ENCODE measurements at regions of chrX and their contacts with region 1.

Region 1: DNA sequence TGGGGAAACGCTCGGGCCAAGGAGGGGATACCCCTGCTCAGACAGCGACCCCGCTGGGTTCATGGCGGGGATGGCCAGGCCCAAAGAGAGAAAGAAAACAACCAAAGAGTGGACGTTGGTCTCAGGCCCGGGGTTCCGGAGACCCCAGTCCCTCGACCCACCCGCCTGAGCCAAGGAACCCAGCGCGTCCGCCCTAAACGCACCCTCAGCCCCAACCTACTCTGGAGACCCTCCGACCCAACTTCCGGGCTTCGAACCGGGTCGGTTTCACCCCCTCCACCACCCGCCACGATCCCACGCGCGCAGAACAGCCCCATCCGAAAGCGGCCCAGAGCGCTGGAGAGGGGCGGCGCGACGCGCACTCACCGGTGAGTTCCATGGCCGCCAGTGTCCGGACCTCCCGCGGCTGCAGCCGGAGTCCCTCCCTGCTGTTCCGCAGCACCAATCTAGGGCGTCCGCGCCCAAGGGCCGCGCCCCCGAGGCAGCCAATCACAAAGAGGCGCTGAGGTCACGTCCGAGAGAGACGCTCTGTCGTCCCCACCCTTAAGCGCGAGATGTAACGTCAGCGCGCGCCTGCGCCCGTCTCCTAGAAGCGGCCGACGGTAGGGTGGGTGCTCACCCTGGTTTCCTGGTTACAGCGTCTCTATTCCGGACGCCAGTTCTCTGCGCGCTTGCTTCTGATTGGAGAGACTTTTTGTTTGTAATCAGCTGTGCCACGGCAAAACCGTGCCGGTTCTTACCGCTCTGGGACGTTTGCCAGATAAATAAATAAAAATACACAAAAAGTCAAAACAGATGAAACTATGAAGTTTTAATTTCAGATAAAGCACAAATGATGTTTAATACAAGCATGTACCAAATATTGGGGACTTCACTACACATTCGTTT is at the start of gene PIGA:
- H3K4me3 Mint-ChIP-seq: peak within 1 kb of the TSS; percentile 95
- H3K27ac Mint-ChIP-seq: peak within 1 kb of the TSS; percentile 94
- H3K4me1 Mint-ChIP-seq: no peaks in the 10 kb centered on the region
- H3K27me3 Mint-ChIP-seq: peaks cover 9% of the 10 kb centered on the region

Region 2: GRCh38 chrX:15366506-15367352 is 31.4 kb after region 1 on chrX:
- intact Hi-C with region 1: no loop called
- H3K4me3 Mint-ChIP-seq: no peak overlapping the region
- H3K27ac Mint-ChIP-seq: peak overlapping the region; percentile 37
- H3K4me1 Mint-ChIP-seq: peaks cover 18% of the 10 kb centered on the region
- H3K27me3 Mint-ChIP-seq: no peaks in the 10 kb centered on the region

Region 3: DNA sequence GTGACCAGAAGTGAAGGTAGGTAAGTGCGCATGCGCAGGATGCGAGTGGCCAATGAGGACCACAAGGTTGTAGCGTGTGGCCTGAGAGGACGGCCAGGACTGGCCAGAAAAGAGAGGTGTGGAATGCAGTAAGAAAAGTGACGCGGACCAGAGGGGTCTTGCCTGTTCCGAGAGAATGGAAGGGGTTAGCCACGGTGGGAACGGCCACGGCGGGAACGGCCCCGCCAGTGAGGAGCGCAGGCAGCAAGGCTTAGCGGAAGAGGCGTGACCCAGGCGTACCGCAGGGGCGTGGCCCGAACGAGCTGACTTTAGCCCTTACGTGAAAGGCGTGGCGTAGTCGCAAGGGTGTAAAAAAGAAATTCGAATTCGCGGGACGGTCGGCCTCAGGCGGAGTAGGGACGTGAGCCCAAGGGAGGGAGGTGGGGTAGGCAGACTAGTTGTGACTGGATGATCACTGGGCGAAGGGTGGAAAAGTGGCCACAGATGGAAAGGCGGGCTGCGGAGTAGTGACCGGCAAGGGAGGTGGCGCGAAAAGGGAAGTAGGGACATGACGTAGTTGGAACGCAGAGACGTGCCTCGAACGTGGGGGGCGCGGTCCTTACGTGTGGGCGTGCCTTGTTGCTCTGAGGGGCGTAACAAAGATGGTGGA is 339.6 kb after region 1 on chrX:
- intact Hi-C with region 1: loop called (anchors 2 kb)
- H3K4me3 Mint-ChIP-seq: no peak overlapping the region
- H3K27ac Mint-ChIP-seq: no peak overlapping the region
- H3K4me1 Mint-ChIP-seq: peaks cover 16% of the 10 kb centered on the region
- H3K27me3 Mint-ChIP-seq: peaks cover 2% of the 10 kb centered on the region